ENCODE measurements at regions of chr14 and their contacts with region 1.

Region 1: DNA sequence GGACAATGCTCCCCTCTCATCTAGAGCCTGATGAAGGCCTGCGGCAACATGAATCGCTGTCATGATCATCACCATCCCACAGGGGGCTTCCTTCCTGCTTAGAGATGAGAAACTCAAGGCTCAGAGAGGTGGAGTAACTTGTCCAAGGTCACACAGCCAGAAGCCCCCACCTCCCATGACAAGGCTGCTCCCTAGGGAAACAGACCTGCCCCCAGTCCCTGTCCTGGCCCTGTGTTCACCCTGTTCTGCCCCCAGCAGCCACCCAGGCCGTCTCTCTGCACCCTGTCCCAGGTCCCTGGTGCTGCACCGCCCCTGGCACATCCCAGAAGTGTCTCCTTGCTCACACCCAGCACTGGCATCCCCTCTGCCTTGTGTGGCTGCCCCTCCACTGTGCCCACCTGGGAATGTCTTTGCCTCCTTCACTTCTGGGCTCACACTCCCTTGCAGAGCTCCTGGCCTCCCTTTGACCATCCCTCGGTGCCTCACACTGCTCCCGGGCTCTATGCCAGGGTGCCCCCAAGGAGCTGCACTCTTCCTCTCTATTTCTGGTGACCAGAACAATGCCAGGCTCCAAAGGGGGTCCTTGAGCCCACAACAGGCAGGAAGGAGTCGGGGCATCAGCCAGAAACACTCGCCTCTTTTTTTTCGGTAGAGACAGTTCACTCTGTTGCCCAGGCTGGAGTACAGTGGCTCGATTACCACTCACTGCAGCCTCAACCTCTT is 70.5 kb downstream of the BCL11B start:
- DNase-seq: peak; percentile 59
- H3K4me3 Mint-ChIP-seq: peak overlapping the region; percentile 47
- H3K27ac Mint-ChIP-seq: peak overlapping the region; percentile 95
- H3K4me1 Mint-ChIP-seq: peaks cover 100% of the 10 kb centered on the region
- H3K27me3 Mint-ChIP-seq: no peaks in the 10 kb centered on the region

Region 2: GRCh38 chr14:99215277-99215676 is 13.8 kb after region 1 on chr14:
- CTCF ChIA-PET with region 1: interaction called, 13 read pairs
- DNase-seq: no peak
- H3K4me3 Mint-ChIP-seq: peak overlapping the region; percentile 56
- H3K27ac Mint-ChIP-seq: peak overlapping the region; percentile 82
- H3K4me1 Mint-ChIP-seq: peaks cover 95% of the 10 kb centered on the region
- H3K27me3 Mint-ChIP-seq: no peaks in the 10 kb centered on the region